ENCODE measurements at regions of chr19 and their contacts with region 1.

Region 1: GRCh38 chr19:49640113-49640898 is at the start of gene RRAS:
- DNase-seq: peak; percentile 100
- H3K4me3 ChIP-seq: peak within 1 kb of the TSS; percentile 81 to 99 (median 94)
- H3K27ac ChIP-seq: peak within 1 kb of the TSS; percentile 94 to 99
- H3K4me1 ChIP-seq: peaks cover 12 to 43% (median 41%) of the 10 kb centered on the region in 4 experiments
- H3K27me3 ChIP-seq: no peaks in the 10 kb centered on the region

Region 2: GRCh38 chr19:49546825-49547565 is 93.3 kb before region 1 on chr19:
- CTCF ChIA-PET with region 1: no interaction called
- POLR2A ChIA-PET with region 1: no interaction called
- DNase-seq: peak; percentile 80 to 89 (median 85)
- H3K4me3 ChIP-seq: no peak overlapping the region
- H3K27ac ChIP-seq: no peak overlapping the region
- H3K4me1 ChIP-seq: peaks cover 0 to 8% (median 2%) of the 10 kb centered on the region in 4 experiments
- H3K27me3 ChIP-seq: no peaks in the 10 kb centered on the region

Region 3: GRCh38 chr19:49590071-49590970 is 50.0 kb before region 1 on chr19:
- CTCF ChIA-PET with region 1: interaction called, 5 read pairs
- POLR2A ChIA-PET with region 1: interaction called, 28 read pairs
- DNase-seq: peak; percentile 97 to 99 (median 98)
- H3K4me3 ChIP-seq: peak overlapping the region; percentile 70 to 96 (median 84)
- H3K27ac ChIP-seq: peak overlapping the region; percentile 64 to 82
- H3K4me1 ChIP-seq: peaks cover 0 to 30% (median 27%) of the 10 kb centered on the region in 4 experiments
- H3K27me3 ChIP-seq: no peaks in the 10 kb centered on the region

Region 4: GRCh38 chr19:49665351-49666119 is 25.2 kb after region 1 on chr19 and contains the starts of genes BCL2L12 and IRF3:
- CTCF ChIA-PET with region 1: interaction called, 10 read pairs
- POLR2A ChIA-PET with region 1: interaction called, 8 read pairs
- DNase-seq: peak; percentile 95 to 98 (median 97)
- H3K4me3 ChIP-seq: peak within 1 kb of the TSS; percentile 84 to 99 (median 96)
- H3K27ac ChIP-seq: peak within 1 kb of the TSS; percentile 61 to 89
- H3K4me1 ChIP-seq: peaks cover 3 to 34% (median 30%) of the 10 kb centered on the region in 4 experiments
- H3K27me3 ChIP-seq: no peaks in the 10 kb centered on the region

Measured in common myeloid progenitor, CD34-positive (primary cell).